ENCODE measurements at regions of chr11 and their contacts with region 1.

Region 1: DNA sequence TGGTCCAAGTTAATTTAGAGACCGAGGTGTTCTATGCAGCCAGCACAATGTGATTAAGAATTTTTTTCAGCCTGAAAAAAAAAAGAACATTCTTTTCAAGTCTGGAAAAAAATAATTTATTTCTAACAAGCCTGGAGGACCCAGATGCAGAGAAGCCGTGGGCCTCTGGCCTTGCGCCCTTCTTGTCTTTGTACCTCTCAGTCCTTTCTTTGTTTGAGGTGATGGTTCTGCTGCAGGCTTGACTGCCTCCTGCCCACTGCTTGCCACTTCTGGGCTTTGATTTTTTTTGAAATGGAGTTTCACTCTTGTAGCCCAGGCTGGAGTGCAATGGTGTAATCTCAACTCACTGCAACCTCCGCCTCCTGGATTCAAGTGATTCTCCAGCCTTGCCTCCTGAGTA is 7.2 kb upstream of the PTPRJ start:
- DNase-seq: no peak
- H3K4me3 ChIP-seq: no peak overlapping the region
- H3K27ac ChIP-seq: peak overlapping the region; percentile 92
- H3K27me3 ChIP-seq: no peaks in the 10 kb centered on the region
- CTCF ChIP-seq: no peak

Region 2: GRCh38 chr11:47946682-47947575 is 26.2 kb before region 1 on chr11:
- CTCF ChIA-PET with region 1: no interaction called
- POLR2A ChIA-PET with region 1: interaction called, 20 read pairs
- DNase-seq: peak; percentile 80
- H3K4me3 ChIP-seq: no peak overlapping the region
- H3K27ac ChIP-seq: peak overlapping the region; percentile 54
- H3K27me3 ChIP-seq: no peaks in the 10 kb centered on the region
- CTCF ChIP-seq: no peak

Region 3: DNA sequence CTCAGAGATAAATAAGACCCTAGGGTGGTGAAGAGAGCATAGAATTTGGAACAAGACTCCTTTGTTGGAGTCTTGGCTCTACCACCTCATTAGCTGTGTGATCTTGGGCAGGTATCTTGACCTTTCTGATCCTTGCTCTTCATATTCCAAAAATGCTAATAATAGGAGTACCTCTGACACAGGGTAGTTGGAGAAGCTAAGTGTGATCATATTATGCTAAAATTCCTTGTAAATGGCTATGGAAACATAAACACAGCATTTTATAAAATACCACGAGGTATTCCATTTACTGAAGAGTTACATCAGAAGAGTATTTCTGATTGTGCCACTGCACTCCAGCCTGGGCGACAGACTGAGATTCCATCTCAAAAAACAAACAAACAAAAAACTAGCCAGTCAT is 16.6 kb after region 1 on chr11:
- CTCF ChIA-PET with region 1: no interaction called
- POLR2A ChIA-PET with region 1: no interaction called
- DNase-seq: no peak
- H3K4me3 ChIP-seq: no peak overlapping the region
- H3K27ac ChIP-seq: no peak overlapping the region
- H3K27me3 ChIP-seq: no peaks in the 10 kb centered on the region
- CTCF ChIP-seq: no peak

Region 4: GRCh38 chr11:48052183-48053045 is 79.2 kb after region 1 on chr11:
- CTCF ChIA-PET with region 1: no interaction called
- POLR2A ChIA-PET with region 1: interaction called, 10 read pairs
- DNase-seq: peak; percentile 47
- H3K4me3 ChIP-seq: no peak overlapping the region
- H3K27ac ChIP-seq: peak overlapping the region; percentile 75
- H3K27me3 ChIP-seq: no peaks in the 10 kb centered on the region
- CTCF ChIP-seq: no peak